ENCODE measurements at regions of chr9 and their contacts with region 1.

Region 1: DNA sequence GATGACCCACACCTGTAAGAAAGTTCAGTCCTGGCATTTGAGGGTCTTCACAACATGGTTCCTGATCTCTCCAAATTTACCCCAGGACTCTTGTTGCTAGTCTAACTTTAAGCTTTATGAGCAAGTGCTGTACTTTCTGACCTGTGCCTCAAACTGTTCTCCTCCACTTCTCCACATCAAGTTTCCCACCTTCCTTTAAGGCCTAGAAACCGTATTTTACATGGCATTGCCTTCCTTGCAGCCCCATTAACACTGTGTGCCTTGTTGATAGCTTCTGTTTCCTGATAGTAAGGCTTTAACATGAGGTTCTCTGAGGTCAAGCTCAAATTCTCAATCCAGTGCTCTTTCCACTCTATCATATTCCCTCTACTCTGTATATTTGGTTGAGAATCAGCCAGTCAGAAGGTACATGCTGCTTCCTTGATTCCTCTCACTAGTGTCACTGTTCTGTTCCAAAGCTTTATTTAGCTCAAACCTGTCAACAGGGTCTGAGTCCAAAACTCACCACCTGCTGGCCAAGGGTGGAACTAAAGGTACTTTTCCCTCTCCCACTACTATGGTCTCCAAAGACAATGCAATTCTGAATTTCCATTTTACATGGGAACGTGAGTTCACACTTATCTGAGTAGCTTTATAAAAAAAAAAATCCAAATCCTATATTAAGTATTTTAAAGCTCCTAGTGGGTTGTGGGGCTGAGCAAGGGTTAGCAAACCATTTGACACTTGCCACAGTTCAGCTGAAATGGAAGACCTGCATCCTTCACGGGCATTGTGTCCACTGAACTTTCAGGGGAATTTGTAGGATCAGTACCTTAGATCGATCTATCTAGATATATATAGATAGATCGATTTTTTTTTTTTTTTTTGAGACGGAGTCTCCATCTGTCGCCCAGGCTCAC is 21.1 kb downstream of the VCP start:
- DNase-seq: peak; percentile 61
- H3K4me3 Mint-ChIP-seq: no peak overlapping the region
- H3K27ac Mint-ChIP-seq: peak overlapping the region; percentile 55
- H3K4me1 Mint-ChIP-seq: peaks cover 3% of the 10 kb centered on the region
- H3K27me3 Mint-ChIP-seq: no peaks in the 10 kb centered on the region

Region 2: DNA sequence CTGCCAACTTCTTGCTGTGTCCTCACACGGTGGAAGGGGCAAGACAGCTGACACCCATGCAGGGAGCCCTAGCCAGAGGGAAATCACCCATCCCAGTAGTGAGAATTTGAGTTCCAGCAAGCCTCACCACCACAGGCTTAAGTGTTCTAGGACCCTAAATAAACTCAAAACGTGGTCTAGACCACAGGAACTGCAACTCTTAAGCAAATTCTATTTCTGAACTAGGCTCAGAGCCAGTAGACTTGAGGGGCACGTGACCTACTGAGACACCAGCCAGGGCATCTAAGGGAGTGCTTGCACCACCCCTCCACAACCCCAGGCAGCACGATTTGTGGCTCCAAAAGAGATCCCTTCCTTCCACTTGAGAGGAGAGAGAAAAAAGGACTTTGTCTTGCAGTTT is 189.3 kb before region 1 on chr9:
- CTCF ChIA-PET with region 1: no interaction called
- POLR2A ChIA-PET with region 1: no interaction called
- DNase-seq: no peak
- H3K4me3 Mint-ChIP-seq: no peak overlapping the region
- H3K27ac Mint-ChIP-seq: no peak overlapping the region
- H3K4me1 Mint-ChIP-seq: no peaks in the 10 kb centered on the region
- H3K27me3 Mint-ChIP-seq: peaks cover 8% of the 10 kb centered on the region

Region 3: GRCh38 chr9:34899535-34900158 is 151.7 kb before region 1 on chr9:
- CTCF ChIA-PET with region 1: interaction called, 25 read pairs
- POLR2A ChIA-PET with region 1: interaction called, 6 read pairs
- DNase-seq: peak; percentile 85
- H3K4me3 Mint-ChIP-seq: no peak overlapping the region
- H3K27ac Mint-ChIP-seq: no peak overlapping the region
- H3K4me1 Mint-ChIP-seq: no peaks in the 10 kb centered on the region
- H3K27me3 Mint-ChIP-seq: peaks cover 44% of the 10 kb centered on the region

Region 4: GRCh38 chr9:35071814-35072460 is 20.6 kb after region 1 on chr9:
- CTCF ChIA-PET with region 1: interaction called, 15 read pairs
- POLR2A ChIA-PET with region 1: no interaction called
- DNase-seq: peak; percentile 71
- H3K4me3 Mint-ChIP-seq: peak overlapping the region; percentile 94
- H3K27ac Mint-ChIP-seq: peak overlapping the region; percentile 87
- H3K4me1 Mint-ChIP-seq: peaks cover 61% of the 10 kb centered on the region
- H3K27me3 Mint-ChIP-seq: no peaks in the 10 kb centered on the region

Region 5: DNA sequence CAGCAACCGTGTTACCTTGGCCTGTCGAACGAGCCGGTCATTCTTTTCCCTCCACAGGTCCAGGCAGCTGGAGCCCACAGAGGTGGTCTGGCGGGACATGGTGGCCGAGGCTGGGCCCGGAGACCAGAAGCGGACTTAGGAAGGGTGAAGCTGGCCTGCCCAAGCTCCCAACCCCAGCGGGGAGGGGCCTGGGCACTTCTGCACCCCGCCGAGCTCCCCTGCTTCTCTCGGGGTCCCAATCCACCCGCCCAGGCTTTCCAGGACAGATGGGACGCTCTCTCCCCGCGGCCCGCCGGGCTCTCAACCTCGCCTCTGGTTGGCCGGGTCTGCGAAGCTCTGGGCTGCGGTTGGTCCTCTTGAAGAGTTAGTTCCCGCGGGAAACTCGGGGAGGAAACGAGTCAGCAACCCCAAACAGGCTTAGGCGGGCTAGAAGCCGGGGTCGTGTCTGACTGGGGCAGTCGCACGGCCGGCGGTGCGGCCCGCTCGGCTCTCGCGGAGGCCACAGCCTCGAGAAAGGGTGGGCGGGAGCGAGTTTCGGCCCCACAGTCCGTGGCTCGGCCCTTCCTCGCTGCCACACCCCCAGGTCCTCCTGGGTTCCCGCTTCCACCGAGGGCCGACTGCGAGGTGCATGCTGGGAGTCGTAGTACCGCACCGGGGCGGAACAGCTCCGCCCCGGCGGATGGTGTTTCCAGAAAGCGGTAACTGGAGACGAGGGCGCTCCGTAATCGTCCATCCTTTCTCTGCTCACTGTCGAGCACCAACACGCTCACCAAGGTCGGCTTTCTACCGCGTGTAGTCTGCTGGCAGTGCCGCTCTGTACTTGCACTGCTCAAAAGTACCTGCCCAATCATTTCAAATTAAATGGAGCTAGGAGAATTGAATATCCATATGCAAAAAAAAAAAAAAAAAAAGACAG is 28.4 kb after region 1 on chr9 and contains the start of gene FANCG:
- CTCF ChIA-PET with region 1: interaction called, 10 read pairs
- POLR2A ChIA-PET with region 1: no interaction called
- DNase-seq: peak; percentile 89
- H3K4me3 Mint-ChIP-seq: peak within 1 kb of the TSS; percentile 97
- H3K27ac Mint-ChIP-seq: peak within 1 kb of the TSS; percentile 99
- H3K4me1 Mint-ChIP-seq: peaks cover 40% of the 10 kb centered on the region
- H3K27me3 Mint-ChIP-seq: no peaks in the 10 kb centered on the region
- total RNA-seq, gene FANCG: 117 to 123 TPM